ENCODE measurements at regions of chr11 and their contacts with region 1.

Region 1: GRCh38 chr11:61967116-61967923 is at the start of gene FTH1:
- DNase-seq: peak; percentile 90 to 95 (median 95)
- H3K4me3 ChIP-seq: peak within 1 kb of the TSS; percentile 64 to 100 (median 97)
- H3K27ac ChIP-seq: peak within 1 kb of the TSS; percentile 86 to 93
- H3K4me1 ChIP-seq: peaks cover 45 to 89% (median 78%) of the 10 kb centered on the region in 4 experiments
- H3K27me3 ChIP-seq: no peaks in the 10 kb centered on the region

Region 2: DNA sequence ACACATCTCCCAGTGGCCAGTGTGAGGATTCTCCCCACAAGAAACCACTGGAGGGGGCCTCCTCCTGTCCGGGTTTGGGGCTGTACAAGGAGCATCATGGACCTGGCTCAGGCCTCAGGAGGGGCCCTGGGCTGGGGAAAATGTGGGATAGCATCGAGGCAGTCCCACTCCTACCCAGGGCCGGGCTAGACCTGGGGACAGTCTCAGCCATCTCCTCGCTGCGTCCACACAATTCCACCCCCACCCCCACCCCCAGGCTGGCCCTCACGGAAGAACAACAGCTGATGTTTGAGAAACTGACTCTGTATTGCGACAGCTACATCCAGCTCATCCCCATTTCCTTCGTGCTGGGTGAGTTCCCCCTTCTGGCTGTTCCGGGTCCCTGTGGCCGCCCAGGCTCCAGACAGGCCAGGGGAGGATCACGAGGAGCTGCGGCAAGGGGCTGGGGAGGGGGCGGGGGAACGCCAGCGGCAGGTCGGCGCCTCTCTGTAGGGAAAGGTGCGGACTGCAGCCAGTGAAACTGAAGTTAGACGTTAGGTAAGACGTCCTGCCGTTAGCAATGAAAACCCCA is 12.4 kb before region 1 on chr11:
- CTCF ChIA-PET with region 1: interaction called, 6 read pairs
- POLR2A ChIA-PET with region 1: interaction called, 12 read pairs
- DNase-seq: peak in 2 of 3 donors; percentile 84 to 87
- H3K4me3 ChIP-seq: peak overlapping the region in 5 of 7 experiments; percentile 15 to 59 (median 32)
- H3K27ac ChIP-seq: no peak overlapping the region
- H3K4me1 ChIP-seq: peaks cover 0 to 23% (median 17%) of the 10 kb centered on the region in 4 experiments
- H3K27me3 ChIP-seq: peaks cover 0 to 5% (median 0%) of the 10 kb centered on the region in 5 experiments

Region 3: DNA sequence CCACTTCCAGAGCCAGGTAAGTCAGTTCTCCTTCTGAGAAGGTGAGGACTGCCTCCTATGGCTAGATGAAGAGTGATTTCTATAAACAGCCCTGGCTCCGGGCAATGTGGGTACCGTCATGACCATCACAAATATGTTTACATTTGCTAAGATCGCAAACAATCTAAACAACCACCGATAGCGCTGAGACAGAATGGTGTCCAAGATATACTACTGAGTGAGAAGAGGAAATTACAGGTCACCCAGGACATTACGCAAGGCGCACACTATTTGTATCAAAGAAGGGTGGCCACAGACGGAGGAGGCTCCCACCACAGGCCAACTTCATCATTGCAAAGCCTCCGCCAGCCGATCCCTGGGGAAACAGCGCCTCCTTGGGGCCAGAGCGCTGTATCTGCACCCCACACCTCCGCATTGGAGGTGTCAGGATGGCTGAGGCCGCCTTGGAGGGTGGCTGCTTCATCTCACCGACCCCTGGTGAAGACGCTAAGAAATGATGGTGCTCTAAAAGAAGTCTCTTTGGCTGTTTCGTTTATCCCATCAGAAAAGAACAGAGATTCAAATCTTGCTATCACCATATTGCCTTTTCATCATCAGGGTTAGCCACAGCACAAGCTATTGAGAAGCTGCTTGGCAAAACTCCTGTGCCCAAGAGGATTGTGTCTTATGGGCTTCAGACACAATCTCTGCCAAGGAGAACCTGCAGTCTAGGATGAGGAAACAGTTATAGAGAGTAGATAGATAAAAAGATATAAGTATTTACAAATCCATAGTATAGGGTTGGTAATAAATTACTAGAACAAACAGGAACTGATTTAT is 357.6 kb after region 1 on chr11:
- CTCF ChIA-PET with region 1: no interaction called
- POLR2A ChIA-PET with region 1: no interaction called
- DNase-seq: peak; percentile 73 to 84 (median 82)
- H3K4me3 ChIP-seq: no peak overlapping the region
- H3K27ac ChIP-seq: no peak overlapping the region
- H3K4me1 ChIP-seq: peaks cover 0 to 2% (median 0%) of the 10 kb centered on the region in 4 experiments
- H3K27me3 ChIP-seq: peaks cover 0 to 3% (median 0%) of the 10 kb centered on the region in 5 experiments

Measured in common myeloid progenitor, CD34-positive (primary cell).